Activated T-helper 1 cell treated with anti-CD3 and anti-CD28 coated beads, Interleukin-12 subunit alpha, Interleukin-12 subunit beta, Interleukin-2, Interleukin-4 antibody, amounts not matched to agents 30 ng/mL and 10 ng/mL and 1 ng/mL, durations not matched to agents 14 hours and 24 hours and 36 hours (primary cell): ENCODE measurements at regions of chr17 and their contacts with region 1.

Region 1: DNA sequence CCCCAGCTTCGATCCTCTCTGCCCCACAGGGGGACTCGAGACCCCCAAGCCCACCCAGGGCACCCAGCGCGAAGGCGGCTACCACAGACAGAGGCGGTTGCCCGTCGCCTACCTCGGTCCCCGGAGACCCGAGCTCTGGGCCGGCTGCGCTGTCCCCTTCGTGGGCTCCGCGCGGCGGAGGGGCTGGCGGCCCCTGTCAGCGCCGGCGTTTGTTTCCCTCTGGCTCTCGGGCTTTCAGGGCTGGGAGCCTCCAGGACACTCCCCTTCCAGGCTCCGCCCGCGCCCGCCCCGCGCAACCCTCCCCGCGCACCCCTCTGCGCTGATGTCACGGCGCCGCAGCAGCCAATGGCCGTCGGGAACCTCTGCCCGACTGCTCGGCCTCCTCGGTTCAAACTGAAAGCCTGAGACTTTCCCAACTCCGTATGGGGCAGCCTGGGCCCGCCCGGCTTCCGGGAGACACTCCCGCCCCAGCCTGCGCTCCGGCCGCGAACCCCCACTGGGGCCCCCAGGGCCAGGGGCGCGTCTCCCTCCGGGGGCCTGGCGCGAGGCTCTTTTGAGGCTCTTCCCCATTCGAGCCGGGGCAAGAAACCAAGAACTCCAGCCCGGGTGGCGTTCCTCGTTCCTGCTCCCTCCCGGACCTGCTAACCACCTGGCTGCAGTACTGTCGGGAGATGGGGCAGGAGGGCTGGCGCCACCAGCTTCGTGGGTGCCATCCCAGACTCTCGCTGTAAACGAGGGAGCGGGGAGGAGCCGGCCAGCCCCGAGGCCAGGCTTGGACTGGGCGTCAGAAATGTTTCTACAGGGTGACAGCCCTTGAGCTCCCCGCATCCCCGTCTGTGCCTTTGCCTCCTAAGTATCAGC is at the start of gene CDC42EP4:
- DNase-seq: peak; percentile 84
- H3K4me3 Mint-ChIP-seq: peak within 1 kb of the TSS; percentile 85
- H3K27ac Mint-ChIP-seq: no peak within 1 kb of the TSS
- H3K4me1 Mint-ChIP-seq: peaks cover 7% of the 10 kb centered on the region
- H3K27me3 Mint-ChIP-seq: peaks cover 18% of the 10 kb centered on the region
- total RNA-seq, gene CDC42EP4: 0.78 and 1.1 TPM in 2 replicates

Region 2: DNA sequence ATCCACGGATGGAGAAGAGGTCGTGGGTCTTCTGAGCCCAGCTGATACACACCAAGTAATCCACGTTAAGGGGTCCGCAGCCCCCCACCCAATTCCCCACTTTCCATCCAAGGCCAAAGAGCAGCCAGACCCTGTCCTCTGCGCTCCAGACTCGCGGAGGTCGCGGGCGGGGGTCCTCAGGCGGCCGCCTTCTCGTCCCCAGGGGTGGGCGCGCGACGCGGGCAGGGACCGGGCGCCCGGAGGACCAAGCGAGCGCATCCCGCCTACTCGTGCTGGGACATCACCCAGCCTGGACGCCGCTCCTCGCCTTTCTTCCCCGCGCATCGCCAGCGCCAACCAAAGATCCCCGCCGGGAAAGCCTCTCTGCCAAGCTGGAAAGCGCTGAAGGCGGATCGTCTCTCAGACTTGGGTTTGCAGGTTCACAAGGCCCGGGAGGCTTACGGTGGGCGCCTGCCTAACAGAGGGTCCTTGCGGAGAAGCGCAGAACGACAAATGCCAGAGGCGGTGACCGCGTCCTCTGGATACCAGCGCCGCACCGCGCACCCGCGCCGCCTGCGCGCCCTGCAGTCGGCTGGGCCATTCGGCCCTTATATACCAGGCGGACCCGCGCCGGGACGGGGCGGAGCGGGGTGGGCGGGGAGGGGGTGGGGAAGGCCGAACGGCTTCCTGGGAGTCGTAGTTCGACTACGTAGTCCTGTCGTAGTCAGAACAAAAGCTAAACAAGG is 719.6 kb before region 1 on chr17:
- intact Hi-C with region 1: loop called (anchors 1 kb)
- DNase-seq: peak; percentile 66
- H3K4me3 Mint-ChIP-seq: peak overlapping the region; percentile 88
- H3K27ac Mint-ChIP-seq: peak overlapping the region; percentile 24
- H3K4me1 Mint-ChIP-seq: peaks cover 37% of the 10 kb centered on the region
- H3K27me3 Mint-ChIP-seq: peaks cover 50% of the 10 kb centered on the region

Region 3: DNA sequence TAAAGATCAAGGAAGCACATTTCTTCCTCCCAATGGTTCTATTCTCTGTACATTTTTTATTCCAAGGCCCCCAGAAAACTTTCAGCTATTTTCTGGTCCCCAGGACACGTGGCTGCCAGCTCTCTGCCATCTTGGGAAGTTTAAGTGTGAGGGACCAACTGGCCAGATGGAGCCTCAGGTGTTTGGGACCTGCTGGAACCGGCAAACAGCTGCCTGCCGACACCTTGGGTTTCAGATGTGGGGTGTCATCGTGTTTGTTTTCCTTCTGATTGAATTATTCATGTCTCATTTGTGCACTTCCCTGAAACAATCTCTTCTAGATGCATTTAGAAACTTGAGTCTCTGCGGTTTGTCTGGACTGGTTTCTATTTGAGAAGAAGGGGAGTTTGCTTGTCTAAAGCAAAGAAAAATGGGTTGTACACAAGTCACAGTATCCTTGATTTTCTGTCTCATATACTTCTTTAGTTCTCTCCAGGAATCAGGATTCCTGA is 606.1 kb before region 1 on chr17:
- intact Hi-C with region 1: loop called (anchors 5 kb)
- DNase-seq: no peak
- H3K4me3 Mint-ChIP-seq: peak overlapping the region; percentile 45
- H3K27ac Mint-ChIP-seq: peak overlapping the region; percentile 89
- H3K4me1 Mint-ChIP-seq: peaks cover 58% of the 10 kb centered on the region
- H3K27me3 Mint-ChIP-seq: no peaks in the 10 kb centered on the region

Region 4: GRCh38 chr17:73064084-73064938 is 247.7 kb before region 1 on chr17:
- intact Hi-C with region 1: no loop called
- DNase-seq: no peak
- H3K4me3 Mint-ChIP-seq: no peak overlapping the region
- H3K27ac Mint-ChIP-seq: no peak overlapping the region
- H3K4me1 Mint-ChIP-seq: no peaks in the 10 kb centered on the region
- H3K27me3 Mint-ChIP-seq: peaks cover 2% of the 10 kb centered on the region

Region 5: DNA sequence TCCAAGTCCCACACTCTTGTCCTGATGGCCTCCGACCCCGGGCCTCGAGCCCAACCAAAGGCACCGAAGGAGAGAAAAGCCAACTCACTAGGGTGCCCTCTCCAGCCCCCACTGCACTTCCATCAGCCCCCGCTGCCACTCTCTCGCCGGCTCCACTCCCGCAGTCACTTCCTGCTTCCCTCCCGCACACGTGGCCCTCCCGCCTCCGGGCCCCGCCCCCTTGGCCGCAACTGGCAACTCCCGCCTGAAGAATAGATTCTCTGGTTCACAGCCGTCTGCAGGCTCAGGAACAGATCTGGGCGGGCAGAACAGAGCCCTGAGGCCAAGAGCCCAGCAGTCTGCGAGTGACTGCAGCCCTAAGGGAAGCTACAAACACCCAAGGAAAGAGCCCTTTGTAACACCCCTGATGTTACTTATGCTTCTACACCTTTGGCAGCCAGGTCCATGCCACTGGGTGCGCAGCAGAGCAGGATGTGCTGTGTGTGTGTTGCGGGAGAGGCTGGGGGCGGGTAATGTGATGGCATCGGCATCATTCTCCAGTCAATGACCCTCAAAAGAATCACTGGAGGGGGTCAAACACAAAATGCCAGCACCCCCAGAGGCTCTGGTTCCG is 219.4 kb before region 1 on chr17 and contains the start of gene SLC39A11:
- intact Hi-C with region 1: loop called (anchors 2 kb)
- DNase-seq: peak; percentile 89
- H3K4me3 Mint-ChIP-seq: peak within 1 kb of the TSS; percentile 100
- H3K27ac Mint-ChIP-seq: peak within 1 kb of the TSS; percentile 98
- H3K4me1 Mint-ChIP-seq: peaks cover 22% of the 10 kb centered on the region
- H3K27me3 Mint-ChIP-seq: peaks cover 6% of the 10 kb centered on the region
- total RNA-seq, gene SLC39A11: 20.9 and 25.7 TPM in 2 replicates

Region 6: DNA sequence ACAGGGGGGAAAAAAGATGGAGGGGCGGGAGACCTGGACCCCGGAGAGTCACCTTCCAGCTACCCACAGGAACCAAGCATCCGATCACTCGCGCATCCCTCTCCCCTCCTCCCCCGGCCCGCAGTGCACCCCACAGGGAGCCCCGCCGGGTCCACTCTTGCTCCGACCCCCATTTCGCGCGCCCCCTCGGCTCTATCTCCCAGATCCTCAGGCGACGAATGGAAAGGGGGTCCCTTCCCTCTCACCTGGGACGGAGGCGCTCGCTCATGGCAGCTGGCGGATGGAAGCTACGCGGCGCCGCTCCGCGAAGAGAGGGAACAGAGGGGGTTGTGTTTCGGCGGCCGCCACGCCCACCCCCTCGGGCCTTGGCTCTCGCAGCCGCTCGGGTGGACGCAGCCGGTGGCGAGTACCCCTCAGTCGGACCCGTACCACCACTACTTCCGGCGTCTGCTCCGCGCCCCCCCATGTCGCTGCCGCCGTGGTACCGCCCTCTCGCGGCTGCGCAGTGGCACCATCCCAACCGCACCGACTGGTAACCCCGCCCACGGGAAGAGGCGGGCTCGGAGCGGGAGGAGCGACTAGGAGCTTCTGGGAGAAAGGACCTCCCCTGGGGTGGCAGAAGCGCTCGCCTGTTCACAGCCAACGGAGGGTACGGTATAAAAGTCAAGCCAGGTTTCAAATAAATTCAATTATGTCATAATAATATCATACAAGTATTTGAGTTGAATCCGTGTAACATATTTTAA is 80.0 kb before region 1 on chr17:
- intact Hi-C with region 1: loop called (anchors 1 kb)
- DNase-seq: peak; percentile 97
- H3K4me3 Mint-ChIP-seq: peak overlapping the region; percentile 97
- H3K27ac Mint-ChIP-seq: peak overlapping the region; percentile 95
- H3K4me1 Mint-ChIP-seq: peaks cover 57% of the 10 kb centered on the region
- H3K27me3 Mint-ChIP-seq: no peaks in the 10 kb centered on the region

Region 7: DNA sequence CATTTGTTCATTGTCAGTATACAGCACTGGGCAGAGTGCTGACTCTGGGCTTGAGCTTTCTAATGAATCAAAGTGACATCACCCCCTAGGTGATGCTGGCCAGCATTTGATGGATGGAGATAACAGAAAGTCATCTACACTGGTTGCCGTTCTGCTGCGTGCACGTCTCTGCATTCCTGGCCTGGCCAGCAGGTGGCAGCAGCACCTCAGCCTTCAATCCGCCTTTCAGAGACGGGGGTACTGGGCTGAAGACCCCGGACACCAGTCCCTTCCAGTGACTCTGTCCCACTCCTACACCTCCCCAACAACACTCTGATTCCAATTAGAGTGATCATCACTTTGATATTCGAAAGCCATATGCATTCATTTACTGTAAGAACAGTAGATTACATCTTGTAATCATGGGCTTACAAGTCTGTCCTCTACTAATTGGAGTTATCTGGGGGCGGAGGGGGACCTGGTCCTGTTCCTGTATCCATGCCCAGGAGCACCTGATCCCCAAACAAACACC is 56.3 kb before region 1 on chr17:
- intact Hi-C with region 1: loop called (anchors 1 kb)
- DNase-seq: peak; percentile 22
- H3K4me3 Mint-ChIP-seq: no peak overlapping the region
- H3K27ac Mint-ChIP-seq: no peak overlapping the region
- H3K4me1 Mint-ChIP-seq: no peaks in the 10 kb centered on the region
- H3K27me3 Mint-ChIP-seq: no peaks in the 10 kb centered on the region

Region 8: GRCh38 chr17:73359987-73360410 is 48.0 kb after region 1 on chr17:
- intact Hi-C with region 1: no loop called
- DNase-seq: no peak
- H3K4me3 Mint-ChIP-seq: no peak overlapping the region
- H3K27ac Mint-ChIP-seq: no peak overlapping the region
- H3K4me1 Mint-ChIP-seq: no peaks in the 10 kb centered on the region
- H3K27me3 Mint-ChIP-seq: no peaks in the 10 kb centered on the region

Region 9: DNA sequence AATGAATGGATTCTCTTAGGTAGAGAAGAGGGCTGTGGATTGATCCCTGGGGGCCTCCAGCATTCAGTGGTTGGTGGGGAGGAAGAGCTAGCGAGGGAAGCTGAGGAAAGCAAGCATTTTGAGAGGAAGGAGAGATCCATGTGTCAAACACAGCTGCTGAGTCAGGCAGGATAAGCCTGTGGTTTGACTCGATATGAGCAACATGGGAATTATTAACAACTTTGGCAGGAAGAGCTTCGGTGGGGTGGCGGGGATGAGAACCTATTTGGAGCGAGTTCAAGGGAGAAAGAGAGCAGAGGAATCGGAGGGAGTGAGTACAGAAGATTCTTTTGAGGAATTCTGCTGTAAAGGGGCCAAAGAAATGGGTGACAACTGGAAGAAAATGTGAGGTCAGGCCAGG is 59.3 kb after region 1 on chr17:
- intact Hi-C with region 1: loop called (anchors 1 kb)
- DNase-seq: no peak
- H3K4me3 Mint-ChIP-seq: no peak overlapping the region
- H3K27ac Mint-ChIP-seq: no peak overlapping the region
- H3K4me1 Mint-ChIP-seq: no peaks in the 10 kb centered on the region
- H3K27me3 Mint-ChIP-seq: peaks cover 10% of the 10 kb centered on the region

Region 10: GRCh38 chr17:73719588-73720071 is 407.6 kb after region 1 on chr17:
- intact Hi-C with region 1: no loop called
- DNase-seq: no peak
- H3K4me3 Mint-ChIP-seq: no peak overlapping the region
- H3K27ac Mint-ChIP-seq: no peak overlapping the region
- H3K4me1 Mint-ChIP-seq: peaks cover 16% of the 10 kb centered on the region
- H3K27me3 Mint-ChIP-seq: peaks cover 2% of the 10 kb centered on the region